Activated CD4-positive, alpha-beta T cell treated with anti-CD3 and anti-CD28 coated beads, Interleukin-2, amount 10 ng/mL, durations not matched to agents 7 days and 5 days (primary cell): ENCODE measurements at regions of chr1 and their contacts with region 1.

Region 1: DNA sequence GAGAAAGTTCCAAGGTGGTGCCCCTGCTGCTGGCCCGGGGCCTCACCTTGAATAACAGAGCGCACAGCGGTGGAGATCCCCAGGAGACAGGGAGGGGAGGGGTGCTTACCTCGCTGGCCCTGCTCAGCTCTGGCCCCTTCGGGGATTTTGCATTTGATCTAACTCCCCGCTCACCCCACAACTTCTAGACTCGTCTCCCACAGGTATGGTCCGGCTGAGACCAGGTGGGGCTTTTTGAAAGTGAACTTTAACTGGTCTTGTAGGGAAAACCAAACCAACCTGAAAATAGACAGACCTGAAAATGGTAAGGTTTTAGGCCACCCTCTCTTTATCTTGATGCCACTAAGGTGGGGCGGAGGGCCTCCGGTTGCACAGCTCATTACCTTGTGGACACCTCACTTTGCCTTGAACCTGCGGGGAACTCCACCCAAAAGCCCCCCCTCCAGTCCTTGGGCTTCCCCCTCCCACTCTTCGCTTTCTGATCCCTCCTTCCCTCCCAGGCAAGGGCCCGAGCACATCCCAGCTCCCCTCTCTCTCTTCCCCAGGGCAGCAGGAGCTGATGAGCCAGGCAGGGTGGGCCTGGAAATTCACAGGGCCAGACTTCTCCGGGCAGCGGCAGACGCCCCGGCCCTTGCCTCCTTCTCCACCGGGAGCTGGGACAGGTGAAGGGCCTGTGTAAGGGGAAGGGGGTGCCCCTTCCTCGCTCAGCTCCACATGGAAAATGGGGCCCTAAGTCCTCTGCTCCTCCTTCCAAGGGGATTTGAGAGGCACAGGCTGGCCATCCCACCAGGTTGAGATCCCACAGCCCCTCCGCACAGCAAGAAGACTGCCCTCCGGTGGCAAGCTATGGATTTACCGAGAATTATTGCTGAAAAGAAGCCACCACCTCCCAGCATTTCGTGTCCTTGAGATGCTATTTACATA is 16.1 kb downstream of the TNFRSF8 start:
- DNase-seq: peak; percentile 51
- H3K4me3 Mint-ChIP-seq: no peak overlapping the region
- H3K27ac Mint-ChIP-seq: peak overlapping the region; percentile 72
- H3K4me1 Mint-ChIP-seq: peaks cover 37% of the 10 kb centered on the region
- H3K27me3 Mint-ChIP-seq: no peaks in the 10 kb centered on the region

Region 2: DNA sequence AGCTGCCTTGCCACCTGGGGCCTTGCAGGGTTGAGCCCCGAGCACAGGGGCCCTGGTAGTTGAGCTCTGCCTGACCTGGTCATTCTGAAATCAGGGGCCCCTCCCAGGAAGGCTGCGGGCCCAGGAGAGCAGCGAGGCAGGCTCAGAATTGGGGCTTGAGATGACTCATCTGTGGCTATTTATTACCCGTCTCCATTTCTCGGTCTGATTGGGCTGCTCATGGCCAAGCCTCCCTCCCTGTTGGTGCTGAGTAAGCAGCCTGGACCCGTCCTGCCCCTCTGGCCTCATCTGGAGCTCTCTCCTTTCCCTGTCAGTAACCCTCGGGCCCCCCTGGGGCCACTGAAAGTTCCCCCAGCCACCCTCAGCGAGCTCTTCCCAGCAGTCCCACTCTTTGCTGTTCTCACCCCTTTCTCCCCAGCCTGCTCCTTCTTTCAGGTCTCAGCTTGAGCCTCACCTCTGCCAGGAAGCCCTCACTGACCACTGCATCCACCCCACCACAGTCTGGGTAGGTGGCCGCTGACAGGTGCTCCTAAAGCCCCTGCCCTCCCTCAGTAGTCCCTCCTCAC is 27.1 kb before region 1 on chr1:
- CTCF ChIA-PET with region 1: interaction called, 11 read pairs
- POLR2A ChIA-PET with region 1: interaction called, 3 read pairs
- DNase-seq: no peak
- H3K4me3 Mint-ChIP-seq: no peak overlapping the region
- H3K27ac Mint-ChIP-seq: peak overlapping the region; percentile 41
- H3K4me1 Mint-ChIP-seq: peaks cover 27% of the 10 kb centered on the region
- H3K27me3 Mint-ChIP-seq: no peaks in the 10 kb centered on the region

Region 3: DNA sequence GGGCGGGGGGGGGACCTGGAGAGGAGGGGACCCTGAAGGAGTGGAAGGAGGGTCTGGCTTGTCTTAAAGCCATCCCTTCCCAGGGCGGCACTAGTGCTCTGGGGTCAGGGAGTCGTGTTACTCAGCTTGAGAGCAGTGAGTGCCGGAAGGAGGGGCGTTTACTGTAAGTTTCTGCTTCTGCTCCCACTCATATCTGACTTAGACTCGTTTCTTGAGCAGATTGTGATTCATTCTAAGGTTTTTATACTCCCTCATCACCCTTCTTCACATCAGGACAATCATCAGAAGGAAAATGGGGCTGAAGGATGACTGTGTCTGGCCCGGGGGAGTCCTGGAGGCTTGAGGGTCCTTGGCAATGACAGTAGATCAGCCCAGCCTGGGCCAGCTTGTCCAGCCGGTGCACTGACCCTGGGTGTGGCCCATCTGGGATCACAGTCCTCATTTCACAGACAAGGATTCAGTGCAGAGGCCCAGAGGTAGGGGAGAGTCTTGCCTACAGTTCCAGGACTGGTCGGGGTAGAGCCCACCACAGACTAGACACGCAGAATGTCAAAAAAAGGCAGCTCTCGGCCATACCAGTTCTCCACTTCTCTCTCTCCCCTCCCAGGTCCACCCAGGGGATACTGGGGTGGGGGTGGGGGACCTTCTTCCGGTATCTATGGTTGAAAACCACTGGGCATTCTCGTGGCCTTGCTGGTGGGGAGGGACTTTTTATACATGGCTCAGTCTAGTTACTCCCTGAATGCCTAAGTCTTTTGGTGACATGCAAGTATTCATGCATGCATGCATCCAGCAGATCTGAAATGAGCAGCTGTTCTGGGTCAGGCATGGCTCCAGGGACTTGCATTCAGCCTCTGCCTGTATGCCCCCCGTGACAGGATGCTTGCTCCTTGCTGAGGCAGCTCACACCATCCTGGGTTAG is 11.0 kb before region 1 on chr1:
- CTCF ChIA-PET with region 1: interaction called, 36 read pairs
- POLR2A ChIA-PET with region 1: interaction called, 5 read pairs
- DNase-seq: peak; percentile 51
- H3K4me3 Mint-ChIP-seq: peak overlapping the region; percentile 5
- H3K27ac Mint-ChIP-seq: peak overlapping the region; percentile 73
- H3K4me1 Mint-ChIP-seq: peaks cover 59% of the 10 kb centered on the region
- H3K27me3 Mint-ChIP-seq: peaks cover 21% of the 10 kb centered on the region

Region 4: DNA sequence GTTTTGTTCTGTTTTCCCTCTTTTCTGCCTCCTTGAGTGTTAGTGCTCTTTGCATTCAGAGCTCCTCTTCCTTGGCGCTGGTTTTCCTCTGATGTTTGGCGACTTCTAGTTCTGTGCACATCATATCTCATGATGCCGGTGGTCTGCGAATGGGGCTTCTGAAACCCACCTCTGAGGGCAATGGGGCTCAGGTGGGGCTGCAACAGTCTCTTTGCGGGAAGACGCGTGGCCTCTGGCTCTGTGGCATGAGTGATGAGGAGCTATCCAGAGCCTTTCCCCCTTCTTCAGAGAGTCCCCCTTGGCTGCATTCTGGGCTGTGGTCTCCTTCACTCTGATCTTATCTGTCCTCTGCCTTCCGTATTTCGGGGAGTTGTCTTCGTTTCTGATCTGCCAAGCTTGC is 22.9 kb after region 1 on chr1:
- CTCF ChIA-PET with region 1: interaction called, 10 read pairs
- POLR2A ChIA-PET with region 1: no interaction called
- DNase-seq: no peak
- H3K4me3 Mint-ChIP-seq: no peak overlapping the region
- H3K27ac Mint-ChIP-seq: peak overlapping the region; percentile 4
- H3K4me1 Mint-ChIP-seq: peaks cover 11% of the 10 kb centered on the region
- H3K27me3 Mint-ChIP-seq: no peaks in the 10 kb centered on the region